ENCODE measurements at regions of chr1 and their contacts with region 1.

Region 1: DNA sequence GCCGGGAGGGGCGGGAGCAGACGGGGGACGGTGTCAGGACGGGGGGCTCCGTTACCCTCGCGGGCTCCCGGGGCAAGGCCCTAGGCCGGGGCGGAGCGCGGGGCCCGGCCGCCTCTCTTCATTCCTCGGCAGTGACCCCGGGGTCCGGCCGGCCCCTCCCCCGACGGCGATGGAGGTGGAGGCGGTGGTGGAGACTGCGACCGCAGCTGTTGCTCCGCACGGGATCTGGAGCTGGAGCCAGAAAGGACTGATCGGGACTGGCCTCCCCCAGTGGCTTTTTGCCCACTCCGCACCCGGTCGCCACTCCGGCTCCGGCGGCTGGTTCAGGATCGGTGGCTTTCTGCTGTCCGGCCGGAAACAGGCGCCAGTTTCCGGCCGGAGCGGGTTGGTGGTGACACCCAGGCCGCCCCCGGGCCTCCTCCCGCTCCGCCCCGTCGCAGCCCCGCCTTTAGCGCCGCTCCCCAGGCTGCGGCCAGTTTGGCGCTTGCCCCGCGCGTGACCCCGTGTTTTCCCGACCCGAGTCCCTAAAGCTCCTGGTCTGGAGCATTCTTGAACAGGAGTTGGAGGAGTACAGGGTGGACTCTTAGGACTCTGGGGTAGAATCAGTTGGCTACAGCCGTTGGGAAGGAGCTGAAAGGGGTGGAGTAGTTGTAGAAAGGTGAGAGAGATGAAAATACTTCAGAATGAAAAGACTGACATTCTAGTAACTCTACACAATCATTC is at the start of gene OTUD7B:
- DNase-seq: peak; percentile 55 to 94 (median 88)

Region 2: GRCh38 chr1:150053926-150054325 is 43.4 kb after region 1 on chr1:
- intact Hi-C with region 1: loop called (anchors 5 kb)
- DNase-seq: no peak

Measured in head of caudate nucleus (tissue), 42 donors.